Naive thymus-derived CD4-positive, alpha-beta T cell (primary cell): ENCODE measurements at regions of chr11 and their contacts with region 1.

Region 1: GRCh38 chr11:96045622-96046456 is 121.9 kb upstream of the MTMR2 start:
- DNase-seq: no peak
- ATAC-seq: no peak
- H3K4me3 ChIP-seq: no peak overlapping the region
- H3K4me3 Mint-ChIP-seq: peak overlapping the region in 1 of 10 donors; percentile 36
- H3K27ac ChIP-seq: no peak overlapping the region
- H3K27ac Mint-ChIP-seq: peak overlapping the region in 8 of 9 donors; percentile 49 to 91 (median 58)
- H3K4me1 ChIP-seq: peaks cover 0 to 8% of the 10 kb centered on the region in 2 donors
- H3K4me1 Mint-ChIP-seq: peaks cover 8 to 86% (median 81%) of the 10 kb centered on the region in 7 donors
- H3K27me3 ChIP-seq: no peaks in the 10 kb centered on the region
- H3K27me3 Mint-ChIP-seq: no peaks in the 10 kb centered on the region

Region 2: DNA sequence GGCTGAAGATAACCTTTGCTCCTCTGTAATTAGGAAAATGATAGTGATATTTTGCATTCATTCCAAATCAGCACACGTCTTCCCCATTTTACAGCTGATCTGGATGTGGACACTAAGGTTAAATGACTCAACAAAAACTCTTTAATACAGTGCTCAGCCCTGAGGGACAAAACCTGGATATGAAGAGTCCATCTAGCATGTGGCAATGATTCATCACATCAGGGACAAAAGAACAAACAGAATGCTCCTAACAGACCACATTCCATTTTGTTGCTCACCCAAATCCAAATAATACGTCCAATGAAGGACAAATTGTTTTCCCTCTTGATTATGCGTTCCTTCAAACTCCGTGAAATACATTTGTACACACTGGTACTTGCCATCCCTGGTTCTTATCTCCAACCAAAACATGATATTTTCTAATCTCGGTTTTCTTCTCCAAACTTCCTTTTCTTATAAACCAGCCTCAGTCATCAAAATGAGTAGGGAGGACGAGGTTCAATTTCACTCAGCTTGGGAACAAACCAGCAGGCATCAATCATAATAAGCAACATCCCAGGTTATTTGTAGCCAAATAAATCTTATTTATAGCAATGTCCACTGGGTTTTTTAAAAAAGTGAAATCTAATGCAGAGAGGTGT is 68.2 kb before region 1 on chr11:
- CTCF ChIA-PET with region 1: no interaction called
- POLR2A ChIA-PET with region 1: no interaction called
- intact Hi-C with region 1: no loop called
- DNase-seq: no peak
- ATAC-seq: no peak
- H3K4me3 ChIP-seq: no peak overlapping the region
- H3K4me3 Mint-ChIP-seq: no peak overlapping the region
- H3K27ac ChIP-seq: no peak overlapping the region
- H3K27ac Mint-ChIP-seq: no peak overlapping the region
- H3K4me1 ChIP-seq: no peaks in the 10 kb centered on the region
- H3K4me1 Mint-ChIP-seq: peaks cover 0 to 8% (median 0%) of the 10 kb centered on the region in 7 donors
- H3K27me3 ChIP-seq: no peaks in the 10 kb centered on the region
- H3K27me3 Mint-ChIP-seq: no peaks in the 10 kb centered on the region

Region 3: GRCh38 chr11:96062134-96062533 is 16.3 kb after region 1 on chr11:
- CTCF ChIA-PET with region 1: no interaction called
- POLR2A ChIA-PET with region 1: no interaction called
- intact Hi-C with region 1: loop called in 1 of 2 experiments (anchors 2 kb)
- DNase-seq: peak in 7 of 9 donors; percentile 18 to 68 (median 43)
- ATAC-seq: peak; percentile 91
- H3K4me3 ChIP-seq: no peak overlapping the region
- H3K4me3 Mint-ChIP-seq: peak overlapping the region in 6 of 10 donors; percentile 15 to 47 (median 28)
- H3K27ac ChIP-seq: peak overlapping the region; percentile 38
- H3K27ac Mint-ChIP-seq: peak overlapping the region; percentile 37 to 79 (median 53)
- H3K4me1 ChIP-seq: peaks cover 0 to 21% of the 10 kb centered on the region in 2 donors
- H3K4me1 Mint-ChIP-seq: peaks cover 30 to 99% (median 86%) of the 10 kb centered on the region in 7 donors
- H3K27me3 ChIP-seq: no peaks in the 10 kb centered on the region
- H3K27me3 Mint-ChIP-seq: no peaks in the 10 kb centered on the region

Region 4: GRCh38 chr11:96373826-96374225 is 328.0 kb after region 1 on chr11:
- CTCF ChIA-PET with region 1: no interaction called
- POLR2A ChIA-PET with region 1: no interaction called
- intact Hi-C with region 1: no loop called
- DNase-seq: no peak
- ATAC-seq: no peak
- H3K4me3 ChIP-seq: no peak overlapping the region
- H3K4me3 Mint-ChIP-seq: no peak overlapping the region
- H3K27ac ChIP-seq: no peak overlapping the region
- H3K27ac Mint-ChIP-seq: no peak overlapping the region
- H3K4me1 ChIP-seq: no peaks in the 10 kb centered on the region
- H3K4me1 Mint-ChIP-seq: peaks cover 0 to 6% (median 2%) of the 10 kb centered on the region in 7 donors
- H3K27me3 ChIP-seq: no peaks in the 10 kb centered on the region
- H3K27me3 Mint-ChIP-seq: no peaks in the 10 kb centered on the region

Region 5: GRCh38 chr11:97656356-97656755 is 1610.5 kb after region 1 on chr11:
- CTCF ChIA-PET with region 1: no interaction called
- POLR2A ChIA-PET with region 1: no interaction called
- intact Hi-C with region 1: no loop called
- DNase-seq: no peak
- ATAC-seq: no peak
- H3K4me3 ChIP-seq: no peak overlapping the region
- H3K4me3 Mint-ChIP-seq: no peak overlapping the region
- H3K27ac ChIP-seq: no peak overlapping the region
- H3K27ac Mint-ChIP-seq: no peak overlapping the region
- H3K4me1 ChIP-seq: no peaks in the 10 kb centered on the region
- H3K4me1 Mint-ChIP-seq: no peaks in the 10 kb centered on the region
- H3K27me3 ChIP-seq: no peaks in the 10 kb centered on the region
- H3K27me3 Mint-ChIP-seq: no peaks in the 10 kb centered on the region